OCI-LY7 (cell line): ENCODE measurements at regions of chr9 and their contacts with region 1.

Region 1: DNA sequence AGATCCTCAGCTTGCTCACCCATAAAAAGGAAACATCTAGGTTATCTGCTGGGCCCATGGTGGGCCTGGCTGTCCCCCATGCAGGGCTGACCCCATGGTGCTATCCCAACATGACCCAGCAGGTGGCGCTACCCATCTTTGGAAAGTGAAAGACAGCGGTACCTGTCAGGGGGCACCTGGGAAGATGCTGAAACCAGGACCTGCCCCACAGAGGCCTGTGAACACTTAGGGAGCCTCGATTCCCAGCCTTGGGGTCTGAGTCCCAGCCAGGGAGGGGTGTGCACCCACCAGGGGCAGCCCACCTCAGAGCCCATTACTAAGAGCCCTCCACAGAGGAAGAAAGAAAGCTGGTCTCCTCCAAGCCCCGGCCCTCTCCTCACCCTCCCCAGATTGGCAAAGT is 46.6 kb upstream of the IPPK start:
- DNase-seq: peak; percentile 80
- H3K4me3 ChIP-seq: peak overlapping the region; percentile 33
- H3K27ac ChIP-seq: peak overlapping the region; percentile 62
- H3K4me1 ChIP-seq: peaks cover 58% of the 10 kb centered on the region
- CTCF ChIP-seq: peak; percentile 97

Region 2: GRCh38 chr9:92328225-92328624 is 388.3 kb before region 1 on chr9:
- CTCF ChIA-PET with region 1: no interaction called
- POLR2A ChIA-PET with region 1: no interaction called
- intact Hi-C with region 1: no loop called
- DNase-seq: peak; percentile 19
- H3K4me3 ChIP-seq: no peak overlapping the region
- H3K27ac ChIP-seq: no peak overlapping the region
- H3K4me1 ChIP-seq: peaks cover 29% of the 10 kb centered on the region
- CTCF ChIP-seq: peak; percentile 47

Region 3: GRCh38 chr9:92669890-92670708 is 46.5 kb before region 1 on chr9 and contains the start of gene IPPK:
- CTCF ChIA-PET with region 1: no interaction called
- POLR2A ChIA-PET with region 1: interaction called, 5 read pairs
- intact Hi-C with region 1: loop called (anchors 2 kb)
- DNase-seq: peak; percentile 100
- H3K4me3 ChIP-seq: peak within 1 kb of the TSS; percentile 77
- H3K27ac ChIP-seq: peak within 1 kb of the TSS; percentile 34
- H3K4me1 ChIP-seq: peaks cover 17% of the 10 kb centered on the region
- CTCF ChIP-seq: no peak
- total RNA-seq, gene IPPK: 12.6 and 12.7 TPM in 2 replicates

Region 4: GRCh38 chr9:92680166-92681119 is 36.1 kb before region 1 on chr9:
- CTCF ChIA-PET with region 1: no interaction called
- POLR2A ChIA-PET with region 1: no interaction called
- intact Hi-C with region 1: no loop called
- DNase-seq: no peak
- H3K4me3 ChIP-seq: no peak overlapping the region
- H3K27ac ChIP-seq: no peak overlapping the region
- H3K4me1 ChIP-seq: peaks cover 15% of the 10 kb centered on the region
- CTCF ChIP-seq: no peak

Region 5: DNA sequence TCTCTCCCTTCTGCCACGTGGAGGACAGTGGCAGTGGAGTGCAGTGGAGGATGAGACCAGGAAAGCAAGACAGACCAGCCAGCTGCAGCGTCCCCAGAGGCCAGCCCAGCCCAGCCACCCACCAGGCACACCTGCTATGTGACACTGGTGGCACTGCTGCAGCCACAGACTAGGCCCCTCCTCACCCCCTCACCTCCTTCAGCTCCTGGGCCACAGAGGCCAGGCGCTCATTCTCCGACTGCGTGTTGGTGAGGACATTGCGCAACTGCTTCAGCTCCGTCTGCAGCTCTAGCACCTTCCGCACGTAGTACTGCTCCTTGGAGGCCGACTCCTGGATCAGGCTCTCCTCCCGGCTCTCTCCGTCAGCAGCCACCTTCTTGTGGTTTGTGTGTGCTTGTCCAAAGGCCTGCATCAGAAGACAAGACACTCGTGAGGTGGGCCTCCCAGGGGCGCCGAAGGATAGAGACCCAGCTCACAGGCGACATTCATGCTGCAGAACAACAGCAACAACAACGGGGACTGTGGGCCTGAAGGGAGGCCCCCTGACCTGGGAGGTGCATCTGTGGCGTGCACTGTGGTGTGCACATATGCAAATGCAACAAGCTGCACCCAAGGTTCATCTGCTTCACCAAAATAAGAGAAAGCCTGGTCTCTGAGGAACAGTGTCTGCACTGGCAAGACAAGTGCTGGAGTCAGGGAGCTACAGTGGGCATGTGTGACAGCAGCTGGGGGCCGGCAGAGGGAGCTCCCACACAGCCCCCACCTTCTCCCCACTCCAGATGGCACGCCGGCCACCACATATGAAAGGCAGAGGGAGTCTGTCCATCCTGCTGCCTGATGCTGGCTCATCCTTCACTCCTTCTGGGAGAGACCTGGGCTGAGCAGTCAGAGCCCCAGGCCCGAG is 12.5 kb after region 1 on chr9:
- CTCF ChIA-PET with region 1: interaction called, 11 read pairs
- POLR2A ChIA-PET with region 1: interaction called, 10 read pairs
- intact Hi-C with region 1: loop called (anchors 1 kb)
- DNase-seq: peak; percentile 91
- H3K4me3 ChIP-seq: peak overlapping the region; percentile 63
- H3K27ac ChIP-seq: peak overlapping the region; percentile 83
- H3K4me1 ChIP-seq: peaks cover 85% of the 10 kb centered on the region
- CTCF ChIP-seq: peak; percentile 93

Region 6: GRCh38 chr9:92790542-92791527 is 74.3 kb after region 1 on chr9:
- CTCF ChIA-PET with region 1: interaction called, 6 read pairs
- POLR2A ChIA-PET with region 1: interaction called, 11 read pairs
- intact Hi-C with region 1: loop called (anchors 1 kb)
- DNase-seq: peak; percentile 84
- H3K4me3 ChIP-seq: no peak overlapping the region
- H3K27ac ChIP-seq: no peak overlapping the region
- H3K4me1 ChIP-seq: peaks cover 18% of the 10 kb centered on the region
- CTCF ChIP-seq: peak; percentile 97

Region 7: DNA sequence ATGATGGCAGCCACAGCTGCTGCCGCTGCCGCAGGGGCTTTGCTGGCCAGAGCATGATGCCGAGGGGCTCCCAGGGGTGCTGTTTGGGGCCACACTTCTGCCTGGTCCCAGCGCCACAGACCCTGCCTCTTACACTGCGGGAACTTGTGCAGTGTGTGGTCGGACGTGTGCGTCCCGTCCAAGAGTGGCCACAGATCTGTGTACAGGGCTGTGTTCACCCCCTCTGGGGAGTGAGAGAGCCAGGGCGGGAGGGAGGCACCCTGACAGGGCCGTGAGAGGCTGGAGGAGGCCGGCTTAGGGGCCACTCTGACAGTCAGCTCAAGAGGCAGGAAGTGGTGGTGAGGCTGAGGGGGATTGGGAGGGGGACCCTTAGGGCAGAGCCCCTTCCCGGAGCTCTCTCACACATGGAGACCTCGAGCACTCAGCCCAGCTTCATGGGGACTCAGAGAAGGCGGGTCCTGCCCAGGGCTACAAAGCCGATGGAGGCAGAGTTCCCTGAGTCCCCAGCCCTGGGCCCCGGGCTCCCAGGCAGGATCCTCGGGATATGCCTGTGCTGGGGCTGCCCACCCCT is 366.4 kb after region 1 on chr9:
- CTCF ChIA-PET with region 1: no interaction called
- POLR2A ChIA-PET with region 1: no interaction called
- intact Hi-C with region 1: no loop called
- DNase-seq: no peak
- H3K4me3 ChIP-seq: no peak overlapping the region
- H3K27ac ChIP-seq: no peak overlapping the region
- H3K4me1 ChIP-seq: no peaks in the 10 kb centered on the region
- CTCF ChIP-seq: no peak